ENCODE measurements at regions of chr1 and their contacts with region 1.

Region 1: DNA sequence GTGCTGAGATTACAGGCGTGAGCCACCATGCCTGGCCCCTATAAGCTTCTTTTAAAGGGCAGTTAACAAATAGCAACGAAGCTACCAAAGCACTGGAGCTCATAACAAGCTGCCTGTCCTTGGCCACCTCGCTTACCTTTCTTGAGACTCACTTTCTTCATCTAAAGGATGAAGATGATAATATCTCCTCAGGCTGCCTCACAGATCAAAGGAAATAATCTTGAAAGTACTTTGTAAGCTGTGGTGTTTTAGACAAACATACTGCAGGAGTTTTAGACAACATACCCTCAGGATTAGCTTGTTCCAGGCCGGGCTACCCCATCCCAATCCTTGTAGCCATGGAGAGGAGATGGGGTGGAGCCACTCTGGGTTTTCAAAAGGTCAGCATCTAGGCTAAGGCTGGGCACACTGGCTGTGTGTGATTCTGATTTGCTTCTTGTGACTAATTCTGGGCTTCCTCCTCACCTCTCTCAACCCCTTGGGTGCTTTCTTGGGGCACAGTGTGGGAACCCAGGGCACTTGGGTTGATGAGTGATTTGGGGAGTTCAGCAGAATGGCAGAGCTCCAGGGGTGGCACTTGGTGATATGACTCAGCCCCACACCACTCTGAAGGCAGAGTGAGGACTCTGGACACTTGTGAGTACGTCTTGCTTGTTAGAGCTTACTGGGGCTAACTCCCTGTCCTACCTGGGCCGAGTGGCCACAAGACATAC is 5.2 kb downstream of the GPR25 start:
- DNase-seq: peak; percentile 86
- ATAC-seq: peak; percentile 88
- H3K4me3 Mint-ChIP-seq: no peak overlapping the region
- H3K27ac Mint-ChIP-seq: no peak overlapping the region
- H3K4me1 Mint-ChIP-seq: peaks cover 50% of the 10 kb centered on the region
- H3K27me3 Mint-ChIP-seq: peaks cover 43% of the 10 kb centered on the region

Region 2: DNA sequence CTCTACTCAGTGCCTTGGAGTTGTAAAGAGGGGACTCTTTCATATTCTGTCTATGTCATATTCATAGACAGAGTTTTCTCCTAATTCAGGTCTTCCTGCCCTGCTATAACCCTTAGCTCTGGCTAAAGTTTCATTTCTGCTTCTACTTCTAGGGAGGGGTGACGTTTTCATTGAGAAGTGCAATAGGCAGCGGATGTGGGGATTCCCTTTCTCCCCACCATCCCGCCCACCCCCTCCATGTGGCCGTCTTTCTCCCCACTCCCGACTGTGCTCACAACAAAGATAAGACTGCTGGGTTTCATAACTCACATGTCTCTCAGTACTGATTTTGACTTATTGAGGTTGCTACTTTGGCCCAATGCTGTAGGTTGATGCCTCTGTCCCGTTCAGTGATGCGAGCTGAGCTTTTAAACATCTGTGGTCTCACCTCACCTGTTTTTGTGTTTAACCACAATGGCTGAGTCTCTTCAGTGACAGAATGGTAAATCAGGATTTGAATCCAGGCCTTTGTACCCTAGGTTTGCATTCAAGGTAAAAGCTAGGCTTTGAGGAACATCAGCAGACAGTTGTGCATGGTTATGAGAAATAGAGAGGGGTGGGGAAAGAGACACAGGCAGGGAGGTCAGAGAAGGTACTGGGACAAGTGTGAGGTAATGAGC is 249.6 kb before region 1 on chr1:
- CTCF ChIA-PET with region 1: interaction called, 7 read pairs
- POLR2A ChIA-PET with region 1: no interaction called
- intact Hi-C with region 1: loop called in 1 of 2 experiments (anchors 2 kb)
- DNase-seq: peak; percentile 74
- ATAC-seq: peak; percentile 66
- H3K4me3 Mint-ChIP-seq: no peak overlapping the region
- H3K27ac Mint-ChIP-seq: peak overlapping the region; percentile 45
- H3K4me1 Mint-ChIP-seq: peaks cover 37% of the 10 kb centered on the region
- H3K27me3 Mint-ChIP-seq: no peaks in the 10 kb centered on the region

Region 3: GRCh38 chr1:200866521-200866920 is 11.5 kb before region 1 on chr1:
- CTCF ChIA-PET with region 1: interaction called, 20 read pairs
- POLR2A ChIA-PET with region 1: interaction called, 13 read pairs
- intact Hi-C with region 1: loop called (anchors 1 kb)
- DNase-seq: peak; percentile 75
- ATAC-seq: peak; percentile 84
- H3K4me3 Mint-ChIP-seq: no peak overlapping the region
- H3K27ac Mint-ChIP-seq: no peak overlapping the region
- H3K4me1 Mint-ChIP-seq: peaks cover 48% of the 10 kb centered on the region
- H3K27me3 Mint-ChIP-seq: peaks cover 35% of the 10 kb centered on the region

Region 4: DNA sequence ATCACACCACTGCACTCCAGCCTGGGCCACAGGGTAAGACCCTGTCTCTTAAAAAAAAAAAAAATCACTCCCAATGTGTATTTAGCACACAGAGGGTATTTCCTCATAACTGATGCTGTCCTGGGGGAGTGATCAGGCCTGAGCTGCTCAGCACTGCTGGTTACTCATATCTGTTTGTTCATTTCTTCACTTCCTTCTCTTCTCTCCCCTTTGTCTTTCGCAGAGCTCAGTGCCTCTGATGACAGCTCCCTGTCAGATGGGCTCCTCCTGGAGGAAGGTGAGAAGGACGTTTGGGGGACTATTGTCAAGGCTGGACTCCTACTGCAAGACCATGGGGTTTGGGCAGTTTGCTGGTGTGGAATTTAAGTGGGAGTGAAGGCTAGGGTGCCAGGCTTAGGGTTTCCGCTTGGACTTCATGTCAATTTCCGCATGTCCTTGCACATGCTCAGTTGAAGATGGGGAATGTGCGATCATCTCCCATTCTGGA is 29.7 kb after region 1 on chr1:
- CTCF ChIA-PET with region 1: interaction called, 5 read pairs
- POLR2A ChIA-PET with region 1: interaction called, 3 read pairs
- intact Hi-C with region 1: loop called (anchors 1 kb)
- DNase-seq: no peak
- ATAC-seq: peak; percentile 25
- H3K4me3 Mint-ChIP-seq: no peak overlapping the region
- H3K27ac Mint-ChIP-seq: no peak overlapping the region
- H3K4me1 Mint-ChIP-seq: peaks cover 11% of the 10 kb centered on the region
- H3K27me3 Mint-ChIP-seq: peaks cover 21% of the 10 kb centered on the region

Region 5: DNA sequence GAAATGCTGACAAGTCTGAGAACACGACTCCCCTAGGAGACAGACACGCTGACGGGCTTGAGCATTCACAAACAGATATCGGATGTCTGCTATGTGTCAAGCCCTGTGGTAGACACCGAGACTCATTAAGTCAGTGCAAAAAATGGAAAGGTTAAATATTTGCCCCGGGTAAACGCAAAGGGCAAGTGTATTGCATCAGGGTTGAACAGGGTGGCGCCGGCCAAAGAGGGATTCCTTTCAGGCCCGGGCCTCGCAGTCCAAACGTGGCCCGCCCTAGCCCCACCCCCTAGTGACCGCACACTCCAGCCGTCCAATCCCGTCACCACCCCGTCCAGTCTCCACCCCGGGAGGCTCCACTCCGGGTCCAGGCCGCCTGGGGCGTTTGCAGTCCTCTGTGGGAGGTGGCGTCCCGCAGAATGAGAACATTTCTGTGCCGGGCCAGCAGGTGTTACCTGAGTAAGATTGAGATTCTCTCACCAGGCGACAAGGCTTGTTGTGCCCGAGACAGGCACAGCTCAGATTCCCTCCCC is 292.6 kb after region 1 on chr1:
- CTCF ChIA-PET with region 1: no interaction called
- POLR2A ChIA-PET with region 1: no interaction called
- intact Hi-C with region 1: loop called in 1 of 2 experiments (anchors 2 kb)
- DNase-seq: peak; percentile 92
- ATAC-seq: peak; percentile 83
- H3K4me3 Mint-ChIP-seq: peak overlapping the region; percentile 71
- H3K27ac Mint-ChIP-seq: peak overlapping the region; percentile 90
- H3K4me1 Mint-ChIP-seq: peaks cover 21% of the 10 kb centered on the region
- H3K27me3 Mint-ChIP-seq: peaks cover 15% of the 10 kb centered on the region

Measured in activated CD4-positive, alpha-beta T cell treated with anti-CD3 and anti-CD28 coated beads for 36 hours (primary cell).